Activated CD8-positive, alpha-beta T cell treated with anti-CD3 and anti-CD28 coated beads, Interleukin-2, amount 10 ng/mL, durations not matched to agents 7 days and 5 days (primary cell): ENCODE measurements at regions of chr12 and their contacts with region 1.

Region 1: GRCh38 chr12:10395390-10395998 is 5.7 kb upstream of the KLRK1 start:
- DNase-seq: no peak
- ATAC-seq: peak; percentile 71
- H3K4me3 Mint-ChIP-seq: peak overlapping the region; percentile 57
- H3K27ac Mint-ChIP-seq: peak overlapping the region; percentile 81
- H3K4me1 Mint-ChIP-seq: peaks cover 67% of the 10 kb centered on the region
- H3K27me3 Mint-ChIP-seq: no peaks in the 10 kb centered on the region

Region 2: GRCh38 chr12:10374624-10375018 is 20.9 kb before region 1 on chr12:
- CTCF ChIA-PET with region 1: interaction called, 10 read pairs
- POLR2A ChIA-PET with region 1: interaction called, 5 read pairs
- DNase-seq: no peak
- ATAC-seq: no peak
- H3K4me3 Mint-ChIP-seq: peak overlapping the region; percentile 27
- H3K27ac Mint-ChIP-seq: peak overlapping the region; percentile 48
- H3K4me1 Mint-ChIP-seq: peaks cover 75% of the 10 kb centered on the region
- H3K27me3 Mint-ChIP-seq: no peaks in the 10 kb centered on the region

Region 3: DNA sequence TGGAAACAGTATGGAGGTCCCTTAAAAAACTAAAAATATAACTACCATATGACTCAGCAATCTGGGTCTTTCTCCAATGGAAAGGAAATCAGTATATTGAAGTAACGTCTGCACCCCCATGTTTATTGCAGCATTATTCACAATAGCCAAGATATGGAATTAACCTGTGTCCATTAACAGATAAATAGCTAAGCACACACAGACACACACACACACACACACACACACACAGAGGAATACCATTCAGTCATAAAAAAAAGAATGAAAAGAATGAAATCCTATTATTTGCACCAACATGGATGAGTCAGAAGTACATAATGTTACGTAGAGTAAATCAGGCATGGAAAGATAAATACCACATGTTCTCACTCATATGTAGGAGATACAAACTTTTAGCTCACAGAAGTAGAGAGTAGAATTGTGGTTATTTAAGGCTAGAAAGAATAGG is 10.3 kb before region 1 on chr12:
- CTCF ChIA-PET with region 1: interaction called, 3 read pairs
- POLR2A ChIA-PET with region 1: interaction called, 14 read pairs
- DNase-seq: no peak
- ATAC-seq: peak; percentile 35
- H3K4me3 Mint-ChIP-seq: peak overlapping the region; percentile 70
- H3K27ac Mint-ChIP-seq: peak overlapping the region; percentile 83
- H3K4me1 Mint-ChIP-seq: peaks cover 57% of the 10 kb centered on the region
- H3K27me3 Mint-ChIP-seq: no peaks in the 10 kb centered on the region

Region 4: DNA sequence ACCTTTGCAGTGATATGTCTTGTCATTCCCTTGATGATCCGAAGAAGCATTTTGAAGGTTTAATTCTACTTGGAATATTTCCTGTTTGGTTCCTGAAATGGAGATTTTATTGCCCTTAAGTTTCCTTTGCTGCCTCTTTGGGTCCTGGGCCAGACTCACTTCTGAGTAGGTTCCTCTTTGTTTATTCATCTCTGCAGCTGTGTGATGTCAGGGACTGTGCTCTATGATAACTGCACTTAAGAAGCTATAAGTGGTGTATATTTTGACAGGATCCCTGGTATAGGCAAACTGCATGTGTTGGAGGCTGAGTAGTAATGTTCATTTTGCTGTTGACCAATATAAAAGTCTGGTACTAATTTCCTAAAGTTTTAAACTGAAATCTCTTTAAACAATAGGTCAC is 13.9 kb after region 1 on chr12 and contains the start of gene KLRC4:
- CTCF ChIA-PET with region 1: interaction called, 6 read pairs
- POLR2A ChIA-PET with region 1: interaction called, 16 read pairs
- DNase-seq: peak; percentile 49
- ATAC-seq: peak; percentile 63
- H3K4me3 Mint-ChIP-seq: peak within 1 kb of the TSS; percentile 77
- H3K27ac Mint-ChIP-seq: peak within 1 kb of the TSS; percentile 86
- H3K4me1 Mint-ChIP-seq: peaks cover 27% of the 10 kb centered on the region
- H3K27me3 Mint-ChIP-seq: no peaks in the 10 kb centered on the region
- total RNA-seq, gene KLRC4: 3.6 to 4.9 TPM